ENCODE measurements at regions of chr7 and their contacts with region 1.

Region 1: GRCh38 chr7:99040104-99040958 is 103.6 kb downstream of the SMURF1 start:
- DNase-seq: peak; percentile 87 to 89 (median 88)
- ATAC-seq: peak; percentile 95
- H3K4me3 ChIP-seq: no peak overlapping the region
- H3K27ac ChIP-seq: no peak overlapping the region
- H3K4me1 ChIP-seq: no peaks in the 10 kb centered on the region; a peak in 3 of 5 replicates
- H3K27me3 ChIP-seq: no peaks in the 10 kb centered on the region
- CTCF ChIP-seq: peak; percentile 84 to 93 (median 90)
- EP300 ChIP-seq: no peak
- POLR2A ChIP-seq: no peak
- RAD21 ChIP-seq: peak; percentile 87 to 92

Region 2: GRCh38 chr7:99143853-99144672 is 103.7 kb after region 1 on chr7 and contains the start of gene SMURF1:
- CTCF ChIA-PET with region 1: no interaction called
- POLR2A ChIA-PET with region 1: interaction called, 3 read pairs
- in situ Hi-C with region 1: no loop called
- intact Hi-C with region 1: loop called (anchors 5 kb)
- DNase-seq: peak; percentile 83 to 92 (median 89)
- ATAC-seq: peak; percentile 55
- H3K4me3 ChIP-seq: peak within 1 kb of the TSS; percentile 75
- H3K27ac ChIP-seq: peak within 1 kb of the TSS; percentile 91
- H3K4me1 ChIP-seq: peaks cover 10 to 18% of the 10 kb centered on the region in 2 experiments; a peak in 4 of 5 replicates
- H3K27me3 ChIP-seq: no peaks in the 10 kb centered on the region
- CTCF ChIP-seq: no peak
- EP300 ChIP-seq: no peak
- POLR2A ChIP-seq: peak; percentile 86
- RAD21 ChIP-seq: peak; percentile 13 to 15; a peak in 2 of 4 replicates
- polyA plus RNA-seq, gene SMURF1: 1.0 to 1.3 TPM

Region 3: DNA sequence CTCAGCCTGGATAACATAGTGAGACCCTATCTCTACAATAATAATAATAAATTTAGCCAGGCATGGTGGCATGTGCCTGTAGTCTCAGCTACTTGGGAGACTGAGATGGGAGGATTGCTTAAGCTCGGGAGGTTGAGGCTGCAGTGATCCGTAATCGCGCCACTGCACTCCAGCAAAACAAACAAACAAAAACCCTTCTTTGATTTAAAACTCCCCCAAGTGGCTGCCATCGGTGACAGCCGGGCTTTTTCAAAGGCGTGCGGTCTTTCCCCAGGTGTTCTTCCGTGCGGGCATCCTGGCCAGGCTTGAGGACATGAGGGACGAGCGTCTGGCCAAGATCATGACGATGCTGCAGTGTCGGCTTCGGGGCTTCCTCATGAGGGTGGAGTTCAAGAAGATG is 230.4 kb after region 1 on chr7:
- CTCF ChIA-PET with region 1: interaction called, 6 read pairs
- POLR2A ChIA-PET with region 1: interaction called, 3 read pairs
- in situ Hi-C with region 1: no loop called
- intact Hi-C with region 1: loop called (anchors 5 kb)
- DNase-seq: peak in 1 of 4 experiments; percentile 43
- ATAC-seq: peak; percentile 9; the same call in 2 of the 3 replicates
- H3K4me3 ChIP-seq: no peak overlapping the region
- H3K27ac ChIP-seq: no peak overlapping the region
- H3K4me1 ChIP-seq: peaks cover 4 to 8% of the 10 kb centered on the region in 2 experiments; a peak in 3 of 5 replicates
- H3K27me3 ChIP-seq: peaks cover 27 to 69% of the 10 kb centered on the region in 2 experiments; a peak in 4 of 5 replicates
- CTCF ChIP-seq: peak; percentile 25 to 56 (median 45); a peak in 3 of 6 replicates
- EP300 ChIP-seq: no peak
- POLR2A ChIP-seq: no peak
- RAD21 ChIP-seq: peak; percentile 16 to 41; a peak in 2 of 4 replicates

Region 4: DNA sequence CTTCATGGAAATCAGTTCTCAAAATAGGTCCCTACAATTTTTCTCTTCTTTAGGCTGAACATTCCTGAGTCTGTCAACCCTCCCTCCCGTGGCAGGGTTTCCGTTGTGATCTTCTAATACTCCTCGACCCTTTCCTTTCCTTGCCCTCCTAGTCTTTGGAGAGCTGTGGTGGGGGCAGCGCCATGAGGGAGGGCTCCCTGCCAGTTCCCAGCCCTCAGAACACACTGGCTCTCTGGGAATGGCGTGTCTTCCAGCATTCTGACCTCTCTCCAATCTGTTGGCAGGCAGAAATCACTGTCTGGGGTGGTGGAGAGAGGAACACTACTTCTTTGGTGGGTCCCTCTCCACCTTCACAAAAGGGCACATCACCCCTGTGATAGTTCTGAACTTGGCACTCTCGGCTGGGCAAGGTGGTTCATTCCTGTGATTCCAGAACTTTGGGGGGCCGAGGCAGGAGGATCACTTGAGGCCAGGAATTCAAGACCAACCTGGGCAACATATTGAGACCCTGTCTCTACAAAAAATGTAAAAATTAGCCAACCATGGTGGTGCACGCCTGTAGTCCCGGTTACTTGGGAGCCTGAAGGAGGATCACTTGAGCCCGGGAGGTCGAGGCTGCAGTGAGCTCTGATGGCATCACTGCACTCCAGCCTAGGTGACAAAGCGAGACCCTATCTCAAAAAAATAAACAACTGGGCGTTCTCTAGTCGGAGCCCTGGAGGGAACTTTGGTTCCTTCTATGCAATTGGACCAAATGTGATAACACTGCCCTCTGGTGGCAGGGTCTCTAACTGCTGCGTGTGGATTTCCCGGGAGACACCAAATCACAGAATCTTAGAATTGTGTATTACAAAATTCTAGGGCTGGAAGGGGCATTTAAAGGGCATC is 272.2 kb after region 1 on chr7:
- CTCF ChIA-PET with region 1: interaction called, 56 read pairs
- POLR2A ChIA-PET with region 1: no interaction called
- in situ Hi-C with region 1: loop called (anchors 5 kb)
- intact Hi-C with region 1: loop called (anchors 1 kb)
- DNase-seq: peak; percentile 79 to 85 (median 80)
- ATAC-seq: peak; percentile 89
- H3K4me3 ChIP-seq: no peak overlapping the region
- H3K27ac ChIP-seq: no peak overlapping the region
- H3K4me1 ChIP-seq: no peaks in the 10 kb centered on the region; a peak in 1 of 5 replicates
- H3K27me3 ChIP-seq: peaks cover 22 to 31% of the 10 kb centered on the region in 2 experiments
- CTCF ChIP-seq: peak; percentile 92 to 96 (median 92)
- EP300 ChIP-seq: no peak
- POLR2A ChIP-seq: no peak
- RAD21 ChIP-seq: peak; percentile 91 to 92

Measured in K562 (cell line).